WTC11 (cell line): ENCODE measurements at regions of chr22 and their contacts with region 1.

Region 1: GRCh38 chr22:20565079-20565734 is 57.8 kb downstream of the MED15 start:
- DNase-seq: no peak
- ATAC-seq: no peak
- H3K4me3 Mint-ChIP-seq: no peak overlapping the region
- H3K27ac Mint-ChIP-seq: no peak overlapping the region
- H3K4me1 Mint-ChIP-seq: no peaks in the 10 kb centered on the region
- H3K27me3 Mint-ChIP-seq: no peaks in the 10 kb centered on the region
- CTCF ChIP-seq: no peak

Region 2: DNA sequence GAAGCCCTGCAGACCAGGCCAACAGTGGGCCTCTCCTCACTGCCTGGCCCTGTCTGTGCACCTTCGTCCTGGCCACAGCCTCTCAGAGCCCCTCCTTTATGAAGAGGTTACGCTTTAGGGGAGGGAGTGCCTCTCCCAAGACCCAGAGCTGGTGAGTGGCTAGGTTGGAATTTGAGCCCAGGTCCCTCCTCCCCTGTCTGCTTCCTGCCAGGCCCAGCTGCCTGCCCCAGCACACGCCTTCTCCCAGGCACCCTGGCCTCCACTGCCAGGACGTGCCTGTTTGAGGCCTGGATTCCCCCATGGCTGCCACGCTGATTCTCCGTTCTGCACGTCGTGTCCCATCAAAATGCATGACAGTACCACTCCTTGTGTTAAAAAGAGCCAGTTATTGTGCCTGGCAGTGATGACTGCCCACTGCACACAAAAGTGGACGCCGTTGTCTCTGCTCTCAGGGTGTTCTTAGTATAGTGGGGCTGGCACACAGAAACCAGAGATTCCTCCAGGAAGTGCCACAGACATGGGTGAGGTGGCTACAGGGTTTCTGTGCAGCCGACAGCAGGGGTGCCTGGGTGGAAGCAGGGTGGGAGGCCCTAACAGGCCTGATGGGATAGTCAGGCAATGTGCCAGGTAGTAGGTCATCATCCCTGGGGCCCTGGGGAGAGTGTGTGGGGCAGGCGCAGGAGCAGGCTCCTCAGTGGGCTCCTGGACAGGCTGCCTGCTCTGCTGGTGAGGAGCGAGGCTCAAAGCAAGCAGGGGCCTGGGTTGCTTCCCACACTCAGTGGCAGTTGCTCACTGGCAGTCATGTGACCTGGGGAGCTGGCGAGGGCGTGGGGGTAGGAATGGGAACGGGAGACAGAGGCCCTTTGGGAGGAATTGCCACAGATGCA is 33.6 kb before region 1 on chr22:
- CTCF ChIA-PET with region 1: interaction called, 14 read pairs
- POLR2A ChIA-PET with region 1: no interaction called
- DNase-seq: peak; percentile 23
- ATAC-seq: peak; percentile 86
- H3K4me3 Mint-ChIP-seq: no peak overlapping the region
- H3K27ac Mint-ChIP-seq: peak overlapping the region; percentile 84
- H3K4me1 Mint-ChIP-seq: peaks cover 36% of the 10 kb centered on the region
- H3K27me3 Mint-ChIP-seq: no peaks in the 10 kb centered on the region; the same call in 1 of the 2 replicates
- CTCF ChIP-seq: no peak

Region 3: GRCh38 chr22:20550821-20551744 is 14.1 kb before region 1 on chr22:
- CTCF ChIA-PET with region 1: interaction called, 28 read pairs
- POLR2A ChIA-PET with region 1: no interaction called
- DNase-seq: peak; percentile 25
- ATAC-seq: peak; percentile 83
- H3K4me3 Mint-ChIP-seq: no peak overlapping the region
- H3K27ac Mint-ChIP-seq: peak overlapping the region; percentile 58
- H3K4me1 Mint-ChIP-seq: peaks cover 26% of the 10 kb centered on the region
- H3K27me3 Mint-ChIP-seq: no peaks in the 10 kb centered on the region
- CTCF ChIP-seq: no peak

Region 4: GRCh38 chr22:20578242-20578691 is 13.1 kb after region 1 on chr22:
- CTCF ChIA-PET with region 1: interaction called, 12 read pairs
- POLR2A ChIA-PET with region 1: no interaction called
- DNase-seq: no peak
- ATAC-seq: no peak
- H3K4me3 Mint-ChIP-seq: no peak overlapping the region
- H3K27ac Mint-ChIP-seq: peak overlapping the region; percentile 57
- H3K4me1 Mint-ChIP-seq: no peaks in the 10 kb centered on the region
- H3K27me3 Mint-ChIP-seq: no peaks in the 10 kb centered on the region
- CTCF ChIP-seq: no peak